ENCODE measurements at regions of chr1 and their contacts with region 1.

Region 1: DNA sequence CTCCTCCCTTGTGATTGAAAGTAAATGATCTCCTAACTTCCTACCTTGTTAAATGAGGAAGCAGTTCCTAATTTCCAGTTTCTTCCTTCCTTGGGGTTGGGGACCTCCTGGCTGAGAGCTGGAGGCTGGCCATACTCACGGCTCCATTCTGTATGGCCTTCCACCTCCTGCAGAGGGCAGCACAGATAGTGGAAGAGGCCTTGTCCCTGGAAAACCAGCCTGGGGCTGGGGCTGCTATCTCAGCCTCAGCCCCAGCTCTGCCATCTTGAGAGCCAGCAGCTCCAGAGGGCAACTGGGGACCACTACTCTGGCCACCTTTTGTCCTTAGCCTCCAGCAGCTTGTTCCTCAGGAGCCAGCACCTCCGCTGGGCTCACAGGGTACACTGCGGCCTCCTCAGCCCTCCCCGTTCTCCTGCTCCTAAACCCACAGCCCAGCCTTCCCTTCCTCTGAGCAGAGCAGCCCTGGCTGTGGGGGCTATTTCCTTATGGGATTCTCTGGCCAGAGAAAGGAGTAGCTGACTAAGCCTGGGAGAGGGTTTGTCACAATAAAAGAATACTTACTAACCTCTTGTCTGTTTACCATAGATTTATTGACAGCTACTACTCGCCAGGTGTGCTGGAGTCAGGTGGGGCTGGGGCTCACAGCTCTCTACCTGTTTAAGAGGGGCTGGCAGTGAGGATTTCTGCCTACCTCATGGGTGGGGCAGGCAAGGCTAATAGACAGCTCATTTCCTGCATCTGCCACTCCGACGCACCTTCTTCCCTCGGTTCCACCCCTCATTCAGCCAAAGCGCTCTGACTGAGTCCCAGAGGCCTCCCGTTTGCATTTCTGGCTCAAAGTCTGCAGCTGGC is 6.3 kb downstream of the TMEM234 start:
- DNase-seq: no peak
- H3K4me3 ChIP-seq: no peak overlapping the region
- H3K27ac ChIP-seq: no peak overlapping the region
- H3K27me3 ChIP-seq: no peaks in the 10 kb centered on the region
- CTCF ChIP-seq: peak; percentile 90

Region 2: GRCh38 chr1:32200226-32201010 is 15.4 kb before region 1 on chr1 and contains the start of gene CCDC28B:
- CTCF ChIA-PET with region 1: interaction called, 18 read pairs
- POLR2A ChIA-PET with region 1: interaction called, 3 read pairs
- DNase-seq: no peak
- H3K4me3 ChIP-seq: peak within 1 kb of the TSS; percentile 79
- H3K27ac ChIP-seq: peak within 1 kb of the TSS; percentile 96
- H3K27me3 ChIP-seq: no peaks in the 10 kb centered on the region
- CTCF ChIP-seq: no peak
- polyA plus RNA-seq, gene CCDC28B: 17.6 and 20.8 TPM in 2 replicates

Region 3: GRCh38 chr1:32240140-32240951 is 24.5 kb after region 1 on chr1:
- CTCF ChIA-PET with region 1: interaction called, 13 read pairs
- POLR2A ChIA-PET with region 1: interaction called, 4 read pairs
- DNase-seq: no peak
- H3K4me3 ChIP-seq: peak overlapping the region; percentile 70
- H3K27ac ChIP-seq: peak overlapping the region; percentile 75
- H3K27me3 ChIP-seq: no peaks in the 10 kb centered on the region
- CTCF ChIP-seq: peak; percentile 27; the same call in 1 of the 2 replicates

Region 4: GRCh38 chr1:32321712-32322291 is 105.9 kb after region 1 on chr1:
- CTCF ChIA-PET with region 1: interaction called, 38 read pairs
- POLR2A ChIA-PET with region 1: no interaction called
- DNase-seq: no peak
- H3K4me3 ChIP-seq: no peak overlapping the region
- H3K27ac ChIP-seq: peak overlapping the region; percentile 0
- H3K27me3 ChIP-seq: no peaks in the 10 kb centered on the region
- CTCF ChIP-seq: no peak

Region 5: DNA sequence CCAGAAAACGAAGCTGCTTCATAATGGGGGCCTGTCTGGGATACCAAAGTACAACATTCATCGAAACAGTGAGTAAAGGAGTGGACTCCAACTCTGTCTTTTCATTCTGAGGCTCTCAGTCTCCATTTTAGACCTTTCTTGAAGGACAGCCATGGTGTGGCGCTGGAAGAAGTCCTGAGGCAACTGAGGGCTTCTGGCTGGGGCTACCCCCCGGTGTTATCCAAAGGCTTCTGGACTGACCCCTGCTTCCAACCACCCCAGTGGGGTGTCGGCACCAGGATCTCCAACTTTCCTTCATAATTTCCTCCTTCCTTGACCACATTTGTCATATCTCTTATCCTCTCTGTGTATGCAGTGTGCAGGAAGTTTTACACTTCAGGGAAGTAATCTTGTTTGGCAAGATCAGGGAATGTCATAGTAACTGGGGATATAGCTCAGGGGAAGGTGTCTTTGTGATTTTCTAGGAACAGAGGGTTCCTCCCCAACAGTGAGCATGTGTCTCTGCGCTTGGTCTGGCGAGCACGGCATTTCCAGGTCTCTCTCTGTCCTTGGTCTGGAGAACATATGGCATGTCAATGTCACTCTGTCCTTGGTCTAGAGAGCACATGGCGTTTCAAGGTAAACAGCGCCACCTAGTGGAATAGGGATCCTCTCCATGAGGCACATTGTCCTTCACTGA is 197.8 kb after region 1 on chr1:
- CTCF ChIA-PET with region 1: interaction called, 11 read pairs
- POLR2A ChIA-PET with region 1: no interaction called
- DNase-seq: no peak
- H3K4me3 ChIP-seq: no peak overlapping the region
- H3K27ac ChIP-seq: no peak overlapping the region
- H3K27me3 ChIP-seq: peaks cover 2% of the 10 kb centered on the region
- CTCF ChIP-seq: peak; percentile 83

Measured in AG04450 (cell line).